ENCODE measurements at regions of chr15 and their contacts with region 1.

Region 1: DNA sequence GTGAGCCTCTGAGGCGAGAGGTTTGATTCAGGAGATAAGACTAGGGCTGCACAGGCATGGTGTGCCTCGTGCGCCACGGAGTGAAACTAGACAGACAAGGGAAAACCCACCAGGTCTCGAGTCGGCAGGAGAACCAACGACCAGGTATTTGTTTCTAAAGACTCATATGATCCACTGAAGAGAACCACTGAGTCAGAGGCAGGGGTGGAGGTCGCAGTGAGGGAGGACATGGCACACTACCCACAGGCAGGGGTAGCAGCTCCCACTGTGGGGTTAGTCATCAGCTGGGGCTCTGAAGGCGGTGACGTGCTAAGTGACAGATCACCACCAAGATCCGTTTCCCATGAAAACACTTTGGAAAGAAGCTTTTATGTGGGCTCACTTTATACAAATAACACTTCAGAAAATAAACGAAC is 45.7 kb downstream of the CHSY1 start:
- DNase-seq: peak; percentile 81
- ATAC-seq: peak; percentile 77
- H3K4me3 Mint-ChIP-seq: peak overlapping the region; percentile 68
- H3K27ac Mint-ChIP-seq: peak overlapping the region; percentile 84
- H3K4me1 Mint-ChIP-seq: peaks cover 83% of the 10 kb centered on the region
- H3K27me3 Mint-ChIP-seq: no peaks in the 10 kb centered on the region

Region 2: DNA sequence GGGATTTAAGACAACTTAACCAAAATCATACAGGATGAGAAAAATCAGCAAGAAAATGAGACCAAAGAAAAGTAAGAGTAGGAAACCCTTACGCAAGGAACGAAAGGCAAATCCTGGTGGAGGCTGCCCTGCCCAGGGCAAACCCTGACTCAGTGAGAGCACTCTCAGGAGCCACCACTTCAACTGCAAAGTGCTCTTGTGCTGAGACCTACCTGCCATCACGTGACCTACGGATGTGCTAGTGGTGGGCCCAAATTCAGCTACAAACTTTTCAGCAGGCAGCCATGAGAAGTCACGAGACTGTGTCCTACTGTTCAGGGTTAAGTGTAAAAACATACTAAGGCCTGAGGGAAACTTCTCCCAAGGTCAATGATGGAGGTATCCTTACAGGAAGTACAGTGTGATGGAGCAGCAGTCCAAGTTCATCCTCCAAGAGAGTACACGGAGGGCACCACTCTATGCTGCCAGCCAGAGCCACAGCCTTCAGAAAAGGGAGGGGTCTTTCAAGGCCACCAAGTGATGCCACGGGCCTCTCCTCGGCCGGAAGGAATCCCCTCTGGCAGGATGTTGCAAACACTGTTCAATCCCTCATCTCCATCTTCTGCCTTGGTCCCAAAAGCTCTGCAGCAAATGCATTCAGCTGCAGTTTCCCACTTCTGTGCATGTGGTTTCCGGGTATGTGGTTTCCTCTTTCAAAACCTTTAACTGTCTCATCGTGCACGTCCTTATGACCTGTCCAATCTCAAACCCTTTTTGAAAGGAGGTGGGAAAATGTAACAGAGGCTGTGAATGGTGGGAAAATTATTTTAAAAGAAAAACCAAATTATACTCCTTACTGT is 36.2 kb after region 1 on chr15:
- CTCF ChIA-PET with region 1: interaction called, 27 read pairs
- DNase-seq: peak; percentile 91
- ATAC-seq: peak; percentile 78
- H3K4me3 Mint-ChIP-seq: peak overlapping the region; percentile 62
- H3K27ac Mint-ChIP-seq: peak overlapping the region; percentile 91
- H3K4me1 Mint-ChIP-seq: peaks cover 94% of the 10 kb centered on the region
- H3K27me3 Mint-ChIP-seq: no peaks in the 10 kb centered on the region

Region 3: DNA sequence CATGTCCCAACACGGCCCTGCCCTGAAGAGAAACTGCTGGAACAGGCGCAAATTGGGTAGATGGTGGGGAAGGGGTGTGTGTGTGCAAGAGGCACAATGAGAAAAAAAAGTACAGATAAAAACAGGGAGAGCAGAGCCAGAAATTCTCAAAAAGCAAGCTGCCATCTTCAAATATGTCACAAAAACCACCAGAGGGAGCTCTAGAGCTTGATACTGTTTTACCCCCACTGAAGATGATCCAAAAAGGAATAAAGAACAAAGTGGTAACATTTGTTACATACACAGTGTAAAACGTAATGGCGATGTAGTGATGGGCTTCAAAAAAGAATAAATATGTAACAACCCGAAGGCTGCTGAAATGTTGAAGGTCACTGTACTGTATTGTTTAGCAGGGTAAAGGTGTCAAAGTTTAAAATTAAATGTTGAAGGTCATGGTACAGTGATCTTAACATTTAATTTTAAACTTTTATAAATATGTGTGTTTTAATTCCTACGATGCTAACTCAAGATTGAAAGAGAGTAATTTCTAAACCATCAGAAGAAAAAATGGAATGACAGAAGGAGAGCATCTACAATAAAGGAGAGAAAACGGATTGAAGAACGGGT is 82.8 kb after region 1 on chr15:
- CTCF ChIA-PET with region 1: no interaction called
- DNase-seq: no peak
- ATAC-seq: peak; percentile 52
- H3K4me3 Mint-ChIP-seq: no peak overlapping the region
- H3K27ac Mint-ChIP-seq: peak overlapping the region; percentile 70
- H3K4me1 Mint-ChIP-seq: peaks cover 61% of the 10 kb centered on the region
- H3K27me3 Mint-ChIP-seq: no peaks in the 10 kb centered on the region